SK-N-SH (cell line): ENCODE measurements at regions of chr3 and their contacts with region 1.

Region 1: DNA sequence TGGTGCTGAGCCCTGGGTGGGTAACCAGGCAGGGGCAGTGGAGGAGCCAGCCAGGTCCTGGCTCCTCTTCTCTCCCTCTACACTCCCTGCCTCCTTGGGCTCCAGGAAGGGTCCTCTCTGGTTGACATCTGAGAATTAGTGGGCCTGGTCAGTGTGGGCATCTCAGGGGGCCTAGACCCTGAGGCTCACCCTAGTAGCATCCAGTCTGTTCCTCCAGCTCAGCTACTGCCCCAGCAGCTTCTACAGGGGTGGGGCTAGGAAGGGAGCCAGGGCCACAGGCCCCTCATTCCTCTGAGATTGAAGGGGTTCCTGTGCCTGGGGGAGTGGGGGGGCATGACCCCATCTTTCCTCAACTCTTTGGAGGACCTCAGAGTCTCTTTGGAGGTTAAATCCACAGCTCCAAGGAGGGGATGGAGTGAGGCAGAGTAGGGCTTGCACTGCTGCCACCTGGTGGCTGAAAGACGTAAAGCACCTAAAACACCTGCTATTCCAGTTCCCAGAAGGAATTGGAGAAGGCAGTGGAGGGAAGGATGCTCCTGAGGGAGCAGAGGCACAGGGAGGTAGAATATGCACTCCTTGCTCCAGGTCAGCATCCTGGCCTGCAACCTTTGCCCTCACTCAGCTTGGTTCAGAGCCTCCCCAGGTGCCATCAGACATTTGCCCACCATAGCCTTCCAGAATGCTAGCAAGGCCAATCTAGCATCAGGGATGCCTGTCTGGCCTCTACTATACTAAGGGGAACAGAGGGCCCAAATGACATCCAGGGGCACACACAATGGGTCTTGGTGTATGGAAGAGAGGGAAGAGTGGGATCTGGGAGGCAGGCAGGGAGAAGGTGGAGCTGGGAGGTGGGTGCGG is 25.1 kb downstream of the C3orf18 start:
- DNase-seq: peak; percentile 89
- H3K4me3 ChIP-seq: no peak overlapping the region; a peak in 1 of 4 replicates
- H3K27ac ChIP-seq: no peak overlapping the region; a peak in 1 of 4 replicates
- H3K4me1 ChIP-seq: peaks cover 0 to 43% of the 10 kb centered on the region in 2 experiments; a peak in 1 of 4 replicates
- H3K27me3 ChIP-seq: peaks cover 6% of the 10 kb centered on the region; the same call in 1 of the 2 replicates
- CTCF ChIP-seq: peak; percentile 86
- EP300 ChIP-seq: no peak
- RAD21 ChIP-seq: peak; percentile 88

Region 2: DNA sequence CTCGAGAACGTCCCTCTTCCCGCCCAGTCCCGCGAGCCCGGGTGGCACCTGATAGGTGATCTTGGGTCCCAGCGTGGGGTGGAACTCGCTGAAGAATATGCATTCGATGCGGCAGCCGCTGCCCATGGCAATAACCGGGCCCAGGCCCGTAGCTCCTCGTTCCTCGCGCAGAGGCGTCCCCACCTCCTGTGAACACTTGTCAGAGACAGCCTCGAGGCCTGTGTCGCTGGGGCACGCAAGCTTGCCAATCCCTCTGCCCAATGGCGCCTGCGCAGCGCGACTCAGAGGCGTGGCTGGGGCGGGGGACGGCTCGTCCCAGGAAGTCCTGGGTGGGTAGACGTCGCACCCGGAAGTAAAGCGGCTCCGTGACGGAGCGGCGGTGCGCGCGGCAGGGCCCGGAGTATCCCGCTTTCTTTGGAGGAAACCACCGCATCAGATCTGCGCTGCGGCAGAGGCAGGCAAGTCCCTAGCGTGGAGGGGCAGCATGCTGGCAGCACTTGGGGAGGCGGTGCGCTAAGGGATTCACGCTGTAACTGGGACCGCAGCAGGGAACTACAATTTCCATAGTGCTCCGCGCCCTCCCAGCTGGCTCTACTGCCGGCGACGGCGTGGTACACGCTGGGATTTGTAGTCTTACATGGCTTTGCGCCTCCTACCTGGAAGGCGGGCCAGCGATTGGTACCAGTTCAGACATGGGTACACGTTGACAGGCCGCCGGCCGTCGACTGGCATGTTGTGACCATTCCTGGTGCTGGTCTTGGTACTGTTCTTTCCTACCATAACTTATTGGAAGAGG is 191.7 kb before region 1 on chr3 and contains the starts of genes CYB561D2 and NPRL2:
- CTCF ChIA-PET with region 1: interaction called, 47 read pairs
- POLR2A ChIA-PET with region 1: interaction called, 3 read pairs
- DNase-seq: peak; percentile 97
- H3K4me3 ChIP-seq: peak within 1 kb of the TSS; percentile 76 to 94
- H3K27ac ChIP-seq: peak within 1 kb of the TSS; percentile 83 to 98
- H3K4me1 ChIP-seq: peaks cover 11 to 59% of the 10 kb centered on the region in 2 experiments; a peak in 2 of 4 replicates
- H3K27me3 ChIP-seq: no peaks in the 10 kb centered on the region
- CTCF ChIP-seq: no peak
- EP300 ChIP-seq: no peak
- RAD21 ChIP-seq: no peak
- polyA plus RNA-seq, gene CYB561D2: 40.7 and 46.5 TPM in 2 replicates
- polyA plus RNA-seq, gene NPRL2: 43.6 and 56.2 TPM in 2 replicates

Region 3: DNA sequence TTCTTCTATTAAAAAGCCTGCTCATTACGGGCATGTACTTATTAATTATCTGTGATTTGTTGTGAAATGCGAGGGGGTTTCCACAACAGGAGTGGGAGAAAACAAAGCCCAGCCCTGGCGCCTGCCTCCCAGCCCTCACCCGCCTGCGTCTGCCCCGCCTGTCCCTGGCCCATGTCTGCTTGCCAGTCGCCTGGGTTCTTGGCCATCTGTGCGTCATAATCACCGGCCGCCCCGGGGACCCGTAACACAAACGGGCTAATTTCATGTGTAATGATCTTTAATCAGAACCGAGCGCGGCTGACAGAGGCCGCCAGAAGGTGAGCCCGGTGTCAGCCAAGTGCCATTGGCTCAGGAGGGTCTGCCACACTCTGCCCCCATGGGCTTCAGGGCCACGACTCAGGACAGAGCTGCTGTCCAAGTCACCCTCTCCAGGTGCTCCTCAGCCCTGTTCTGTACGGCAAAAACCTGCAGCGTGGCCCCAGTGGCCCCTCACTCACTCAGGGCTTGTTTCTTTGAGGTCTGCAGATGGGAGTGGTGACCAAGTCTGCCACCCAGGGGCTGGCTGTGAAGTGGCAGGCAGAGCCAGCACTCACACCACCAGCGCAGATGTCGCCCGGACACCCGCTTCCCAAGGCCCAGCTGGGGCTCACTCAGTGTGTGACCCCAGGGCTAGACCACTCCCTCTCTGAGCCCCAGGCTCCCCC is 154.2 kb before region 1 on chr3:
- CTCF ChIA-PET with region 1: interaction called, 31 read pairs
- POLR2A ChIA-PET with region 1: no interaction called
- DNase-seq: peak; percentile 89
- H3K4me3 ChIP-seq: no peak overlapping the region
- H3K27ac ChIP-seq: peak overlapping the region in 1 of 2 experiments; percentile 100; a peak in 2 of 4 replicates
- H3K4me1 ChIP-seq: peaks cover 0 to 99% of the 10 kb centered on the region in 2 experiments; a peak in 2 of 4 replicates
- H3K27me3 ChIP-seq: no peaks in the 10 kb centered on the region
- CTCF ChIP-seq: peak; percentile 46
- EP300 ChIP-seq: peak in 1 of 2 experiments; percentile 86; a peak in 1 of 4 replicates
- RAD21 ChIP-seq: peak; percentile 73

Region 4: GRCh38 chr3:50503504-50504342 is 38.7 kb before region 1 on chr3 and contains the start of gene CACNA2D2:
- CTCF ChIA-PET with region 1: interaction called, 40 read pairs
- POLR2A ChIA-PET with region 1: no interaction called
- DNase-seq: peak; percentile 96
- H3K4me3 ChIP-seq: peak within 1 kb of the TSS in 1 of 2 experiments; percentile 58; a peak in 2 of 4 replicates
- H3K27ac ChIP-seq: peak within 1 kb of the TSS in 1 of 2 experiments; percentile 65; a peak in 2 of 4 replicates
- H3K4me1 ChIP-seq: peaks cover 0 to 40% of the 10 kb centered on the region in 2 experiments; a peak in 1 of 4 replicates
- H3K27me3 ChIP-seq: peaks cover 18% of the 10 kb centered on the region; the same call in 1 of the 2 replicates
- CTCF ChIP-seq: no peak
- EP300 ChIP-seq: no peak
- RAD21 ChIP-seq: no peak
- polyA plus RNA-seq, gene CACNA2D2: 1.1 and 2.8 TPM in 2 replicates

Region 5: DNA sequence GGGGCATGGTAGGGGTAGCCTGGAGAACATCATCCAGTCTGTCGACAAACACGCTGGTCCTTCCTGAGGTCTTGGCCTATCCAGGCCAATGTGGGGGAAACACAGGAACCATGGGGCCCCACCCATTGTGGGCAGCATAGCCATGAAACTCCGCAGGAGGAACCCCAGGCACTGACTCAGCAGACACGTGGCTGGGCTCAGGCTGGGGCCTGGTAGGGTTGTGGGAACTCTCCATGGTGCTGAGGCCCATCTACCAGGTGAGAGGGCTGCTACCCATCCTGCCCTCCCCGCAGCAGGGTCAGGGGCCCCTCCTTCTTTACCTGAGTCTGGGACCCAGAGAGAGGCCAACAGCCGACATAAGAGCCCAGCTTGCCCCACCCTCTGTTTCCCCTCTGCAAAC is 16.4 kb before region 1 on chr3:
- CTCF ChIA-PET with region 1: interaction called, 114 read pairs
- POLR2A ChIA-PET with region 1: no interaction called
- DNase-seq: no peak
- H3K4me3 ChIP-seq: no peak overlapping the region
- H3K27ac ChIP-seq: no peak overlapping the region; a peak in 1 of 4 replicates
- H3K4me1 ChIP-seq: peaks cover 0 to 28% of the 10 kb centered on the region in 2 experiments; a peak in 1 of 4 replicates
- H3K27me3 ChIP-seq: peaks cover 26% of the 10 kb centered on the region
- CTCF ChIP-seq: no peak
- EP300 ChIP-seq: no peak
- RAD21 ChIP-seq: no peak

Region 6: GRCh38 chr3:50568947-50569749 is 26.7 kb after region 1 on chr3 and contains the start of gene HEMK1:
- CTCF ChIA-PET with region 1: interaction called, 10 read pairs
- POLR2A ChIA-PET with region 1: no interaction called
- DNase-seq: peak; percentile 99
- H3K4me3 ChIP-seq: peak within 1 kb of the TSS; percentile 71 to 81
- H3K27ac ChIP-seq: peak within 1 kb of the TSS; percentile 86 to 96
- H3K4me1 ChIP-seq: peaks cover 0 to 22% of the 10 kb centered on the region in 2 experiments; a peak in 1 of 4 replicates
- H3K27me3 ChIP-seq: no peaks in the 10 kb centered on the region
- CTCF ChIP-seq: no peak
- EP300 ChIP-seq: peak in 1 of 2 experiments; percentile 48; a peak in 1 of 4 replicates
- RAD21 ChIP-seq: no peak
- polyA plus RNA-seq, gene HEMK1: 15.4 and 21.7 TPM in 2 replicates

Region 7: DNA sequence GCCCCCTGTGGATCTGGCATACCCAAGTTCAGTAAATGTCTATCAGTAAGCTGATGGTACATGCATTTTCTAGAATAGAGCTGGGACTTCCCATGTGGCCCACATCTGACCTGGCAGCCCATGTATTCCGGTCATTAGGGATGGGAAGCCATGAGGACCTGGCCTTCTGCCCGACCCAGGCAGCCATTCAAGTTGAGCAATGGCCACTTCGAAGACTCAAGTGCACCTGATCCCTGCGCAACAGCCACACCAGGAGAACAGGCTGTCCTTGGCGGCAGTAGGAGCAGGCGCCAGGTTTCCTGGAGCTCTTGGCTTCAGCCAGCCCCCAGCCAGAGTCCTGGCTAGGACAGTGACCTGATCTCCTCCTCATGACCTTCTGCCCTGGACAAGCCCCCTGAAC is 41.5 kb after region 1 on chr3:
- CTCF ChIA-PET with region 1: no interaction called
- POLR2A ChIA-PET with region 1: no interaction called
- DNase-seq: no peak
- H3K4me3 ChIP-seq: no peak overlapping the region
- H3K27ac ChIP-seq: no peak overlapping the region; a peak in 1 of 4 replicates
- H3K4me1 ChIP-seq: no peaks in the 10 kb centered on the region; a peak in 1 of 4 replicates
- H3K27me3 ChIP-seq: no peaks in the 10 kb centered on the region
- CTCF ChIP-seq: no peak
- EP300 ChIP-seq: no peak
- RAD21 ChIP-seq: no peak

Region 8: GRCh38 chr3:50671331-50671730 is 128.9 kb after region 1 on chr3:
- CTCF ChIA-PET with region 1: no interaction called
- POLR2A ChIA-PET with region 1: no interaction called
- DNase-seq: no peak
- H3K4me3 ChIP-seq: no peak overlapping the region
- H3K27ac ChIP-seq: no peak overlapping the region
- H3K4me1 ChIP-seq: peaks cover 0 to 4% of the 10 kb centered on the region in 2 experiments; a peak in 1 of 4 replicates
- H3K27me3 ChIP-seq: peaks cover 56% of the 10 kb centered on the region
- CTCF ChIP-seq: no peak
- EP300 ChIP-seq: no peak
- RAD21 ChIP-seq: no peak

Region 9: GRCh38 chr3:50714946-50715345 is 172.5 kb after region 1 on chr3:
- CTCF ChIA-PET with region 1: no interaction called
- POLR2A ChIA-PET with region 1: no interaction called
- DNase-seq: peak; percentile 45
- H3K4me3 ChIP-seq: no peak overlapping the region
- H3K27ac ChIP-seq: no peak overlapping the region; a peak in 1 of 4 replicates
- H3K4me1 ChIP-seq: no peaks in the 10 kb centered on the region
- H3K27me3 ChIP-seq: no peaks in the 10 kb centered on the region; the same call in 1 of the 2 replicates
- CTCF ChIP-seq: no peak
- EP300 ChIP-seq: no peak
- RAD21 ChIP-seq: no peak

Region 10: GRCh38 chr3:50777680-50778079 is 235.3 kb after region 1 on chr3:
- CTCF ChIA-PET with region 1: no interaction called
- POLR2A ChIA-PET with region 1: no interaction called
- DNase-seq: no peak
- H3K4me3 ChIP-seq: no peak overlapping the region
- H3K27ac ChIP-seq: no peak overlapping the region
- H3K4me1 ChIP-seq: no peaks in the 10 kb centered on the region
- H3K27me3 ChIP-seq: no peaks in the 10 kb centered on the region
- CTCF ChIP-seq: no peak
- EP300 ChIP-seq: no peak
- RAD21 ChIP-seq: no peak